ENCODE measurements at regions of chr12 and their contacts with region 1.

Region 1: GRCh38 chr12:51814311-51815088 is 34.0 kb downstream of the FIGNL2 start:
- DNase-seq: peak; percentile 95
- H3K4me3 ChIP-seq: peak overlapping the region; percentile 26 to 48; a peak in 2 of 4 replicates
- H3K27ac ChIP-seq: no peak overlapping the region; a peak in 1 of 4 replicates
- H3K4me1 ChIP-seq: peaks cover 8 to 14% of the 10 kb centered on the region in 2 experiments; a peak in 3 of 4 replicates
- H3K27me3 ChIP-seq: no peaks in the 10 kb centered on the region
- CTCF ChIP-seq: peak; percentile 49
- EP300 ChIP-seq: no peak
- RAD21 ChIP-seq: peak; percentile 65

Region 2: DNA sequence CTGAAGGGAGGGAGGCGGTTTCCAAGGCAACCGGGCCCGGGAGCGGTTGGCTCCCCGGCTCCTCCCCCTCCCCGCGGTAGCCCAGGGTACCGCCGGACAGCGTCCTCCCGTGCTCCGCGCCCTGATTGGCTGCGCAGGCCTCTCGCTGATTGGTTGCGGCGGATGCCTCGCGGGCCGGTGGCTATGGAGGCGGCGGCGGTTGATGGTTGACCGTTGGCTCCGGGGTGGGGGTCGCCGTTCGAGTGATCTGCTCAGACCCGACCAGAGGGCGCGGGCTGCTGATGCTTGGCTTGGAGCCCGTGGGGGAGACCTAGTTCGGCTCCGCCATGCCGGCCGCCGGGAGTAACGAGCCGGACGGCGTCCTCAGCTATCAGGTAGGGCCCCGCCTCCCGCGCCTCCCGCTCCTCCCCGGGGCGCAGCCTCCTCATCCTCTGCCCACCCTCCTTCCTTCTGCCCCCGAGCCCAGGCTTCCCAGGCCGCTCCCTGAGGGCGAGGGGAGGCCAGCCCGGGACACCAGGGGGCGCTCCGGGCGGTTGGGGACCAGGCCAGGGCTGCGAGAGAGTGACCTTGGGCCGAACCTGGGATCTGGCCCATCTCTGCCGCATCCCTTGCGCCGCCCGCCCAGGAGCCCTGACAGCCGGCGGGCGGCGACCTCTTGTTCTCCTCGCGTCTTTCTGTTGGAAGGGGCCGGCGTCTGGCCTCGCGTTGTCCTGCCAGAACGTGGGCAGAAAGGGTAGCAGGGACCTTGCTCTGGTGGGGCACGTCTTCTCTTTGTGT is 389.6 kb before region 1 on chr12 and contains the start of gene SLC4A8:
- CTCF ChIA-PET with region 1: interaction called, 74 read pairs
- POLR2A ChIA-PET with region 1: no interaction called
- DNase-seq: peak; percentile 96
- H3K4me3 ChIP-seq: peak within 1 kb of the TSS; percentile 76 to 84
- H3K27ac ChIP-seq: peak within 1 kb of the TSS in 1 of 2 experiments; percentile 90; a peak in 3 of 4 replicates
- H3K4me1 ChIP-seq: peaks cover 4 to 32% of the 10 kb centered on the region in 2 experiments; a peak in 2 of 4 replicates
- H3K27me3 ChIP-seq: no peaks in the 10 kb centered on the region
- CTCF ChIP-seq: peak; percentile 83
- EP300 ChIP-seq: no peak
- RAD21 ChIP-seq: peak; percentile 59
- polyA plus RNA-seq, gene SLC4A8: 3.6 and 5.2 TPM in 2 replicates

Region 3: GRCh38 chr12:51531978-51532497 is 282.5 kb before region 1 on chr12:
- CTCF ChIA-PET with region 1: interaction called, 19 read pairs
- POLR2A ChIA-PET with region 1: no interaction called
- DNase-seq: peak; percentile 80
- H3K4me3 ChIP-seq: no peak overlapping the region
- H3K27ac ChIP-seq: no peak overlapping the region
- H3K4me1 ChIP-seq: peaks cover 6 to 27% of the 10 kb centered on the region in 2 experiments; a peak in 2 of 4 replicates
- H3K27me3 ChIP-seq: no peaks in the 10 kb centered on the region
- CTCF ChIP-seq: peak; percentile 83
- EP300 ChIP-seq: no peak
- RAD21 ChIP-seq: peak; percentile 95

Region 4: GRCh38 chr12:51590347-51591019 is 224.0 kb before region 1 on chr12:
- CTCF ChIA-PET with region 1: interaction called, 10 read pairs
- POLR2A ChIA-PET with region 1: interaction called, 4 read pairs
- DNase-seq: peak; percentile 96
- H3K4me3 ChIP-seq: peak overlapping the region; percentile 63 to 72
- H3K27ac ChIP-seq: peak overlapping the region; percentile 31 to 50; a peak in 2 of 4 replicates
- H3K4me1 ChIP-seq: peaks cover 0 to 16% of the 10 kb centered on the region in 2 experiments; a peak in 2 of 4 replicates
- H3K27me3 ChIP-seq: no peaks in the 10 kb centered on the region
- CTCF ChIP-seq: peak; percentile 44
- EP300 ChIP-seq: no peak
- RAD21 ChIP-seq: peak; percentile 41; the same call in 1 of the 2 replicates

Region 5: DNA sequence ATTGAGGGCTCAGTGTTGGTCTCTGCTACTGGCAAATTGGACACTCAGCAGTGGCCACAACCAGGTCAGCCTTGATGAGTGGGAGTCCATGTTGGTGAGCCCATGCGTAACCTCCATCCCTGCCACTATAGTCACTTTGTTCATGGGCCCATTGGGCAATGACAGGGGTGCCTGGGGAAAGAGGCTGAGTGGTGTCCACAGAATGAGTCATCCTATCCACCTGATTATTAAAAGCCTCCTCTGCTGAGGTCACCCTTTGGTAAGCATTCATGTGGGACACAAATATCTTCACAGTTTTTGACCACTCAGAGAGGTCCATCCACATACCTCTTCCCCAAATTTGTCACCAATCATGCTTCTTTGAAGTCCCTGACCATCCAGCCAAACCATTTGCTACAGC is 16.0 kb before region 1 on chr12:
- CTCF ChIA-PET with region 1: interaction called, 12 read pairs
- POLR2A ChIA-PET with region 1: no interaction called
- DNase-seq: no peak
- H3K4me3 ChIP-seq: no peak overlapping the region
- H3K27ac ChIP-seq: no peak overlapping the region
- H3K4me1 ChIP-seq: no peaks in the 10 kb centered on the region
- H3K27me3 ChIP-seq: no peaks in the 10 kb centered on the region
- CTCF ChIP-seq: no peak
- EP300 ChIP-seq: no peak
- RAD21 ChIP-seq: no peak

Region 6: GRCh38 chr12:51832354-51833107 is 18.0 kb after region 1 on chr12:
- CTCF ChIA-PET with region 1: interaction called, 17 read pairs
- POLR2A ChIA-PET with region 1: no interaction called
- DNase-seq: no peak
- H3K4me3 ChIP-seq: no peak overlapping the region
- H3K27ac ChIP-seq: no peak overlapping the region
- H3K4me1 ChIP-seq: peaks cover 0 to 24% of the 10 kb centered on the region in 2 experiments; a peak in 1 of 4 replicates
- H3K27me3 ChIP-seq: no peaks in the 10 kb centered on the region
- CTCF ChIP-seq: no peak
- EP300 ChIP-seq: no peak
- RAD21 ChIP-seq: no peak

Region 7: DNA sequence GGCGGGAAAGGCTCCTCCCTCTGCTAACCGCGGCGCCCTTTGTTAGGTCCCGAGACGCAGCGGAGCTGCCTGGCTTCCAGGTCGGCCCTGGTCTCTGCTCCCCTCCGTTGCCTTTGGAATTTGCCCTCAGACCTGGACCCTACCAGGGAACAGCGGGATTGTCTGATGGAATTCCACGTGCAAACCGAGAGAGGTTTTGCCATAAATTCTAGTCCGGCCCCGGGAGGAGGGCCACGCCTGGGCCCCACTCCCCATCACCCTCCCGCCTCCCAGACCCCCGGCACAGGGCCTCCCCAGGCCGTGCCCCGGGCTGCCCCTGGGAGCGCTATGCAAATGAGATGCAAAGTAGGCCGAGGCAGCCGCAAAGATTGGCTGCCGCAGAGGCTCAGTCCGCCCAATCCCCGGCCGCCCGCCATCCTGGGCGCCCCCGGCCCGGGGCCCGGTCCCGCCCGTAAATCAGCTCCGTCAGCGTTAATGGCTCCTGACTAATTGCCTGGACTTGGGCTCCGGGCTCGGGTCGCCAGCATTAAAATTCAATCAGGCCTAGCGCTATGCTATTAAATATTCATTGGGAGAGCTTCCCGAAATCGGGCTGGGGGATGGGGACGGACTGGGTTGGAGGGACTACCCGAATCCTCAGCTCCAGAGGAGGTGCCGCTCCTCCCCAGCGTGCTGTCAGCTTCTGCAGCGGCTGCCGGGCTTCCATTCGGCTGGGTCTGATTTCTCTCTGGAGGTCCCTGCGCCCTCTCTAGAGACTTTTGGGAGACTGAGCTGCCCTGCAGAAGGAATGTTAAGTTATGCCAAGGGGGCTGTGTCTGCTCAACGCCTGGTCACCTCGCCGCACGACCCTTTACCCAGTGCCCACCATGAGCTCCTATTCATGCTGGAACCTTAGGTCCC is 49.7 kb after region 1 on chr12:
- CTCF ChIA-PET with region 1: interaction called, 194 read pairs
- POLR2A ChIA-PET with region 1: no interaction called
- DNase-seq: peak; percentile 77
- H3K4me3 ChIP-seq: no peak overlapping the region
- H3K27ac ChIP-seq: no peak overlapping the region
- H3K4me1 ChIP-seq: peaks cover 0 to 37% of the 10 kb centered on the region in 2 experiments; a peak in 1 of 4 replicates
- H3K27me3 ChIP-seq: no peaks in the 10 kb centered on the region; the same call in 1 of the 2 replicates
- CTCF ChIP-seq: no peak
- EP300 ChIP-seq: no peak
- RAD21 ChIP-seq: no peak

Measured in SK-N-SH (cell line).